K562 (cell line): ENCODE measurements at regions of chr1 and their contacts with region 1.

Region 1: DNA sequence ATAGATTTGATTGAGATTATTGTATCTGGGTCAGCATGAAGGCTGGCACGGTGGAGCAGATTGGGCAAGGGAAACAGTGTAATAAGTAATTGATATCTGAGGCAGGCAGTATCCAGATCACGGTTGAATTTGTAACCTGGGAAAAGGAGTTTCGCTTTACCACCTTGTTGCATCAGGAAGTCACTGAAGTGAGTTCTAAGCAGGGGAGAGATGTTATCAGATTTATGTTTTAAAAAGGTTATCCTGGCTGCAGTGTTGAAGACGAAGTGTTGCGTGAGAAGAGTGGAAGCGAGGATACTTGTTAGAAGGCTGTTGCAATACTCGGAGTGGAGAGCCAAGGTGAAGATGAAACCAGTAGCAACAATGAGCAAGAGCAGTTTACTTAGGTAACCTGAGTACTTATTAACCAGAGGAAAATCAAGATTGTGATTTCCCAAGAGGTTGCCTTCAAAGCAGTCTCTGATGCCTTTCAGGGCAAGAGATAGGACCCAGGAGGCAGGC is 77.8 kb downstream of the LHX9 start:
- DNase-seq: peak in 2 of 4 experiments; percentile 10 to 34
- ATAC-seq: peak; percentile 78
- H3K4me3 ChIP-seq: peak overlapping the region; percentile 41
- H3K27ac ChIP-seq: peak overlapping the region; percentile 73
- H3K4me1 ChIP-seq: no peaks in the 10 kb centered on the region
- H3K27me3 ChIP-seq: no peaks in the 10 kb centered on the region
- CTCF ChIP-seq: no peak
- EP300 ChIP-seq: peak; percentile 67; the same call in 1 of the 2 replicates
- POLR2A ChIP-seq: no peak
- RAD21 ChIP-seq: no peak

Region 2: DNA sequence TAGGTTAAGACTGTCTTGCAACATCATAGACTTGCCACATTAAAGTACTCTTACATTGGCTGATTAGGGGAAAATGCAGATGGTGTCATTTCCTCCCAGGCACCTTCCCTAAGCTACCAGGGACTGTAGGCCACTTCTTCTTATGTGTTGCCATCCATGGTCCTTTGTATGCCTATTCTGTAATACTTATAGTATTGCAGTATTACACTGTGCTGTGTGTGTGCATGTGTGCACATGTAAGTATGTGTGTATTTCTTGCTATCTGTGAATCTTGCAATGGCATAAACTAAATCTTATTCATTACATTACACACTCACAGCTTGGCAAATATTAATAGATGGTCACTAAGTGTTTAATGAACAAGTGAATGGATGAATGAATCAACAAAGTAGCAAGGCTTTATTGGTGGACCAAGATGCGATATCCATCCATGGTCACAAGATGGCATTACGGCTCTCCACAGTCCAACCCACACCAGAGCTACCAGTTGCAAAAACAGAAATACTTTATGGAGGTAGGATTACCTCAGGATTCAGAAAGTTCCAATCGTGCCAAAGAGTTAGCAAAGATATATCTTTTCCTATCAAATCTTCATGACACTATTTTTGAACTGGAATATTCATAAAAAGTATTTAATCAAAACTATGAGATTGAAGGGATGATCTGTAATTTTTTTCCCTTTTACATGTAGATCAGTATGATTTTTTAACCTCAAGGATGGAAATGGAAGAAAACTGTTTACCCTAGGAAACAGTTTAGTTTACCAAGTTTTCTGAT is 379.9 kb before region 1 on chr1:
- CTCF ChIA-PET with region 1: no interaction called
- POLR2A ChIA-PET with region 1: no interaction called
- in situ Hi-C with region 1: no loop called
- intact Hi-C with region 1: loop called (anchors 5 kb)
- DNase-seq: peak in 2 of 4 experiments; percentile 18 to 62
- ATAC-seq: peak; percentile 95
- H3K4me3 ChIP-seq: no peak overlapping the region
- H3K27ac ChIP-seq: no peak overlapping the region
- H3K4me1 ChIP-seq: no peaks in the 10 kb centered on the region
- H3K27me3 ChIP-seq: no peaks in the 10 kb centered on the region
- CTCF ChIP-seq: peak; percentile 63 to 74 (median 67)
- EP300 ChIP-seq: no peak
- POLR2A ChIP-seq: no peak
- RAD21 ChIP-seq: peak; percentile 85 to 88

Region 3: GRCh38 chr1:197937892-197938291 is 57.1 kb before region 1 on chr1:
- CTCF ChIA-PET with region 1: no interaction called
- POLR2A ChIA-PET with region 1: interaction called, 3 read pairs
- in situ Hi-C with region 1: no loop called
- intact Hi-C with region 1: loop called (anchors 2 kb)
- DNase-seq: no peak
- ATAC-seq: no peak
- H3K4me3 ChIP-seq: no peak overlapping the region
- H3K27ac ChIP-seq: no peak overlapping the region
- H3K4me1 ChIP-seq: no peaks in the 10 kb centered on the region; a peak in 1 of 5 replicates
- H3K27me3 ChIP-seq: no peaks in the 10 kb centered on the region
- CTCF ChIP-seq: no peak
- EP300 ChIP-seq: no peak
- POLR2A ChIP-seq: no peak
- RAD21 ChIP-seq: no peak

Region 4: GRCh38 chr1:198157241-198157846 is 162.4 kb after region 1 on chr1:
- CTCF ChIA-PET with region 1: no interaction called
- POLR2A ChIA-PET with region 1: interaction called, 3 read pairs
- in situ Hi-C with region 1: no loop called
- intact Hi-C with region 1: loop called (anchors 2 kb)
- DNase-seq: peak; percentile 69 to 96 (median 80)
- ATAC-seq: peak; percentile 65
- H3K4me3 ChIP-seq: peak overlapping the region; percentile 82
- H3K27ac ChIP-seq: peak overlapping the region; percentile 85
- H3K4me1 ChIP-seq: peaks cover 10 to 13% of the 10 kb centered on the region in 2 experiments; a peak in 4 of 5 replicates
- H3K27me3 ChIP-seq: no peaks in the 10 kb centered on the region
- CTCF ChIP-seq: no peak
- EP300 ChIP-seq: no peak
- POLR2A ChIP-seq: no peak; the same call in none of the 2 replicates
- RAD21 ChIP-seq: no peak

Region 5: GRCh38 chr1:198641501-198641900 is 646.5 kb after region 1 on chr1:
- CTCF ChIA-PET with region 1: no interaction called
- POLR2A ChIA-PET with region 1: no interaction called
- in situ Hi-C with region 1: no loop called
- intact Hi-C with region 1: loop called (anchors 5 kb)
- DNase-seq: peak in 1 of 4 experiments; percentile 52
- ATAC-seq: peak; percentile 55
- H3K4me3 ChIP-seq: peak overlapping the region; percentile 37
- H3K27ac ChIP-seq: peak overlapping the region; percentile 79
- H3K4me1 ChIP-seq: peaks cover 0 to 2% of the 10 kb centered on the region in 2 experiments; a peak in 1 of 5 replicates
- H3K27me3 ChIP-seq: no peaks in the 10 kb centered on the region
- CTCF ChIP-seq: no peak
- EP300 ChIP-seq: no peak
- POLR2A ChIP-seq: no peak
- RAD21 ChIP-seq: no peak